ENCODE measurements at regions of chr22 and their contacts with region 1.

Region 1: DNA sequence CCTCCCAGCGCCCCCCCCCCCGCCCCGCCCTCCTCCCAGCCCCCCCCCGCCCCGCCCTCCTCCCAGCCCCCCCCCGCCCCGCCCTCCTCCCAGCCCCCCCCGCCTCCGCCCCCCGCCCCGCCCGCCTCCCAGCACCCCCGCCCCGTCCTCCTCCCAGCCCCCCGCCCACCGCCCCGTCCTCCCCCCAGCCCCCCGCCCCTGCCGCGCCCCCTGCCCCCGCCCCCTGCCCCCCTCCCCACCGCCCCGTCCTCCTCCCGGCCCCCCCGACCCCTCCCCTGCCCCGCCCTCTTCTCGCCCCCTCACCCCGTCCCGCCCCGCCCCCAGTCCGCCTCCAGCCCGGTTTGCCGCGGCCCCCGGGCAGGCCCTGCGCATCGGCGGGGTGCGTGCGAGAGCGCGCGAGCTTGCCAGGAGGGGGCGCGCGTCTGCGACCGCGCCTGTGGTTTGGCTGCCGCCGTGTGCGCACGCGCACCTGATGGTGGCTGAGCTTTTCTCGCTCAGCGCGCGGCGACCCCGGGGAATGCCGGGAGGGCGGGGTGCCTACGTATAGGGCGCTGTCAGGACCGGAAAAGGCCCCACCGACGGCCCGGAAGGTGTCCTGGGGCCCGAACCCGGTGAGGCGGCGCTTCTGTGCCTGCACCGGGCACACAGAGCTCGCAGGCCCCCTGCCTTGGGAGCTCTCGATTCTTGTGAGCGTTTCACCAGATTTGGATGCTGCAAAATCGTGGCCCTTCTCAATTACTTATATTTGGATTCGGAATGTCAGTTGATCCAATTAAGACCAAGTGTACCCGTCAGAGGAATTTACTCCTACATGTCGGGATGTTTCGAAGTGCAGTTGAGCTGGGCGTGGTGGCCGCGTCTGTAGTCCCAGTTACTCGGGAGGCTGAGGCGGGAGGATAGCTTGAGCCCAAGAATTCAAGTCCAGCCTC is 501 bp upstream of the TTLL12 start:
- DNase-seq: peak; percentile 92
- H3K4me3 ChIP-seq: peak overlapping the region; percentile 41 to 50 (median 43)
- H3K27ac ChIP-seq: peak overlapping the region; percentile 74
- H3K4me1 ChIP-seq: peaks cover 30% of the 10 kb centered on the region
- H3K27me3 ChIP-seq: no peaks in the 10 kb centered on the region
- CTCF ChIP-seq: peak; percentile 40 to 65

Region 2: DNA sequence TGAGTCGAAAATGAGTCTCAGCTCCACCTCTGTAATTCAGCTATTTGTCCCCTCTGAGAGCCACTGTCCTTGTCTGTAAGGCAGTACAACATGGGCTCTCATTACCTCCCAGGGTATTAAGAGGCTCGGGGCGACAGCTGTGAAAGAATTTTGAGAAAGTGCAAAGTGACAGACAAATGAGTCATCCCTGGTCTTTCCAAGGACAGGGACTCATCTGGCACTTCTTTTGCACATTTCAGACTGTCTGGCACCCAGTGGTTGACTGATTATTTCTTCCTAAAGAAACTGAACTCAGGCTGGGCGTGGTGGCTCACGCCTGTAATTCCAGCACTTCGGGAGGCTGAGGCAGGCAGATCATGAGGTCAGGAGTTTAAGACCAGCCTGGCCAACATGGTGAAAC is 268.2 kb before region 1 on chr22:
- CTCF ChIA-PET with region 1: no interaction called
- dilution Hi-C with region 1: no loop called
- in situ Hi-C with region 1: no loop called
- intact Hi-C with region 1: no loop called
- DNase-seq: peak; percentile 44
- H3K4me3 ChIP-seq: peak overlapping the region in 1 of 3 experiments; percentile 10
- H3K27ac ChIP-seq: peak overlapping the region; percentile 65
- H3K4me1 ChIP-seq: peaks cover 48% of the 10 kb centered on the region
- H3K27me3 ChIP-seq: no peaks in the 10 kb centered on the region
- CTCF ChIP-seq: no peak

Region 3: GRCh38 chr22:43109921-43110443 is 77.5 kb before region 1 on chr22:
- CTCF ChIA-PET with region 1: no interaction called
- dilution Hi-C with region 1: loop called (anchors 5 kb)
- in situ Hi-C with region 1: no loop called
- intact Hi-C with region 1: no loop called
- DNase-seq: no peak
- H3K4me3 ChIP-seq: peak overlapping the region; percentile 49 to 71 (median 66)
- H3K27ac ChIP-seq: no peak overlapping the region
- H3K4me1 ChIP-seq: peaks cover 9% of the 10 kb centered on the region
- H3K27me3 ChIP-seq: no peaks in the 10 kb centered on the region
- CTCF ChIP-seq: no peak

Region 4: GRCh38 chr22:43154887-43155536 is 32.4 kb before region 1 on chr22:
- CTCF ChIA-PET with region 1: no interaction called
- dilution Hi-C with region 1: no loop called
- in situ Hi-C with region 1: no loop called
- intact Hi-C with region 1: loop called (anchors 2 kb)
- DNase-seq: no peak
- H3K4me3 ChIP-seq: no peak overlapping the region
- H3K27ac ChIP-seq: no peak overlapping the region
- H3K4me1 ChIP-seq: peaks cover 29% of the 10 kb centered on the region
- H3K27me3 ChIP-seq: no peaks in the 10 kb centered on the region
- CTCF ChIP-seq: no peak

Region 5: GRCh38 chr22:43230971-43231723 is 43.7 kb after region 1 on chr22:
- CTCF ChIA-PET with region 1: no interaction called
- dilution Hi-C with region 1: no loop called
- in situ Hi-C with region 1: no loop called
- intact Hi-C with region 1: loop called (anchors 2 kb)
- DNase-seq: peak; percentile 32
- H3K4me3 ChIP-seq: no peak overlapping the region
- H3K27ac ChIP-seq: no peak overlapping the region
- H3K4me1 ChIP-seq: no peaks in the 10 kb centered on the region
- H3K27me3 ChIP-seq: no peaks in the 10 kb centered on the region
- CTCF ChIP-seq: peak; percentile 86 to 91

Region 6: GRCh38 chr22:43298062-43298801 is 110.8 kb after region 1 on chr22:
- CTCF ChIA-PET with region 1: no interaction called
- dilution Hi-C with region 1: no loop called
- in situ Hi-C with region 1: no loop called
- intact Hi-C with region 1: no loop called
- DNase-seq: no peak
- H3K4me3 ChIP-seq: no peak overlapping the region
- H3K27ac ChIP-seq: no peak overlapping the region
- H3K4me1 ChIP-seq: no peaks in the 10 kb centered on the region
- H3K27me3 ChIP-seq: peaks cover 3% of the 10 kb centered on the region
- CTCF ChIP-seq: no peak

Region 7: GRCh38 chr22:43481568-43482317 is 294.3 kb after region 1 on chr22:
- CTCF ChIA-PET with region 1: no interaction called
- dilution Hi-C with region 1: no loop called
- in situ Hi-C with region 1: no loop called
- intact Hi-C with region 1: no loop called
- DNase-seq: no peak
- H3K4me3 ChIP-seq: no peak overlapping the region
- H3K27ac ChIP-seq: no peak overlapping the region
- H3K4me1 ChIP-seq: no peaks in the 10 kb centered on the region
- H3K27me3 ChIP-seq: no peaks in the 10 kb centered on the region
- CTCF ChIP-seq: peak in 1 of 2 donors; percentile 14